PC-3 (cell line): ENCODE measurements at regions of chr20 and their contacts with region 1.

Region 1: DNA sequence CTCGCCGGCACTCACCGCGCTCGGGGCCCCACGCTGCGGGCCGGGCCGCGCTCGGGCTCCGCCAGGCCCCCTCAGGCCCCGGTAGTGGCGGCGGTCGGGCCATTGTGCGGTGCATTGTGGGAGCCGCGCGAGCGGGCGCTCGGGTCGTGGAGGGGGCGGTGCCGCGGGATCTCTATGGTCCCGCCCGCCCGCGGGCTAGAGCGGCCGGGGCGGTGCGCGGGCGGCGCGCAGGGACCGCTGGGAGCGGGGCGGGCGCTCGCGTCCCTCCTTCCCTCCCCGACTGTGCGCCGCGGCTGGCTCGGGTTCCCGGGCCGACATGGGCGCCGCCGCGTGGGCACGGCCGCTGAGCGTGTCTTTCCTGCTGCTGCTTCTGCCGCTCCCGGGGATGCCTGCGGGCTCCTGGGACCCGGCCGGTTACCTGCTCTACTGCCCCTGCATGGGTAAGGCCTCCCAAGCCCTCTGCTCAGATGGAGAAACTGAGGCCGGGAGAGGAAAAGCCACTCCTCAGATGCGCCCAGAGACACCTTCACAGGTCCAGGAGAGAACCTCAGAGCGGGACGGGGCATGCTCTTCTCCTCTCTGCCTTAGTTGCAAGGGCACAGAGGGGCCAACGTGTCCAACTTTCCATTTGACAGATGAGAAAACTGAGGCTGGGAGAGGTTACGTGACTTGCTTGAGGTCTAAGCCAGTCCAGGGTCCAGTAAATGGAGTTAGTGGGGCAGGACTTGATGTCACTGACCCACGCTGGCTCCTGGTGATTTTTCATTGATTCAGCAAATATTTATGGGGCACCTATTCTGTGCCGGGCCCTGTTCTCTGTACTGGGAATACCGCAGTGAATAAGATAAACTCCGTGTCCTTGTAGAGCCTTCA is at the starts of genes PLAGL2 and POFUT1:
- DNase-seq: peak; percentile 92
- ATAC-seq: peak; percentile 97
- H3K4me3 ChIP-seq: peak within 1 kb of the TSS; percentile 97
- H3K27ac ChIP-seq: peak within 1 kb of the TSS; percentile 27
- H3K4me1 ChIP-seq: peaks cover 42% of the 10 kb centered on the region
- H3K27me3 ChIP-seq: no peaks in the 10 kb centered on the region
- CTCF ChIP-seq: peak; percentile 34; the same call in 1 of the 2 replicates
- total RNA-seq, gene PLAGL2: 4.4 and 6.2 TPM in 2 replicates
- total RNA-seq, gene POFUT1: 41.9 and 56.3 TPM in 2 replicates

Region 2: GRCh38 chr20:32189691-32190615 is 17.9 kb before region 1 on chr20:
- CTCF ChIA-PET with region 1: no interaction called
- POLR2A ChIA-PET with region 1: no interaction called
- intact Hi-C with region 1: no loop called
- DNase-seq: no peak
- ATAC-seq: peak; percentile 66
- H3K4me3 ChIP-seq: peak overlapping the region; percentile 76
- H3K27ac ChIP-seq: no peak overlapping the region
- H3K4me1 ChIP-seq: peaks cover 7% of the 10 kb centered on the region
- H3K27me3 ChIP-seq: no peaks in the 10 kb centered on the region
- CTCF ChIP-seq: no peak

Region 3: DNA sequence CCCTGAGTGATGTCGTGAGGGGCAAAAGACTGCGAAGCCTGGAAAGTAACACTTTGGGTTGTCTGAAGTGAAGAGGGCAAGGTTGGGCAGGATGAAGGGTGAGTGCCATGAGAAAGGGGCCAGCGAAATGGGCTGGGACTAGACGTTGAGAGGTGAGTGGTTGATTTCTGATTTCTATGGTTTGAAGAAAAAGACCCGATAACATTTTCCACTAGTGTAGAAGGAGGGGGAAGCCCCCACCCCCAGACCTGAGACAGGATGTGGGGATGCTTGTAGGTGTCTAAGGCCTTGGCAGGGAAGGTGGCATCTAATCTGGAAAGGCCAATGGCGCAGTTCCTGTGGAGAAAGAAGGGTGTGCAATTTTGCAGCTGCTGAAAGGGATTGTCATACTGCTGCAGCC is 44.3 kb after region 1 on chr20:
- CTCF ChIA-PET with region 1: no interaction called
- POLR2A ChIA-PET with region 1: no interaction called
- intact Hi-C with region 1: loop called (anchors 5 kb)
- DNase-seq: no peak
- ATAC-seq: no peak
- H3K4me3 ChIP-seq: no peak overlapping the region
- H3K27ac ChIP-seq: no peak overlapping the region
- H3K4me1 ChIP-seq: peaks cover 20% of the 10 kb centered on the region
- H3K27me3 ChIP-seq: no peaks in the 10 kb centered on the region
- CTCF ChIP-seq: no peak

Region 4: GRCh38 chr20:32325706-32326503 is 118.0 kb after region 1 on chr20:
- CTCF ChIA-PET with region 1: no interaction called
- POLR2A ChIA-PET with region 1: no interaction called
- intact Hi-C with region 1: loop called (anchors 5 kb)
- DNase-seq: peak; percentile 96
- ATAC-seq: peak; percentile 99
- H3K4me3 ChIP-seq: peak overlapping the region; percentile 6; the same call in 1 of the 2 replicates
- H3K27ac ChIP-seq: peak overlapping the region; percentile 92
- H3K4me1 ChIP-seq: peaks cover 11% of the 10 kb centered on the region
- H3K27me3 ChIP-seq: no peaks in the 10 kb centered on the region
- CTCF ChIP-seq: no peak

Region 5: DNA sequence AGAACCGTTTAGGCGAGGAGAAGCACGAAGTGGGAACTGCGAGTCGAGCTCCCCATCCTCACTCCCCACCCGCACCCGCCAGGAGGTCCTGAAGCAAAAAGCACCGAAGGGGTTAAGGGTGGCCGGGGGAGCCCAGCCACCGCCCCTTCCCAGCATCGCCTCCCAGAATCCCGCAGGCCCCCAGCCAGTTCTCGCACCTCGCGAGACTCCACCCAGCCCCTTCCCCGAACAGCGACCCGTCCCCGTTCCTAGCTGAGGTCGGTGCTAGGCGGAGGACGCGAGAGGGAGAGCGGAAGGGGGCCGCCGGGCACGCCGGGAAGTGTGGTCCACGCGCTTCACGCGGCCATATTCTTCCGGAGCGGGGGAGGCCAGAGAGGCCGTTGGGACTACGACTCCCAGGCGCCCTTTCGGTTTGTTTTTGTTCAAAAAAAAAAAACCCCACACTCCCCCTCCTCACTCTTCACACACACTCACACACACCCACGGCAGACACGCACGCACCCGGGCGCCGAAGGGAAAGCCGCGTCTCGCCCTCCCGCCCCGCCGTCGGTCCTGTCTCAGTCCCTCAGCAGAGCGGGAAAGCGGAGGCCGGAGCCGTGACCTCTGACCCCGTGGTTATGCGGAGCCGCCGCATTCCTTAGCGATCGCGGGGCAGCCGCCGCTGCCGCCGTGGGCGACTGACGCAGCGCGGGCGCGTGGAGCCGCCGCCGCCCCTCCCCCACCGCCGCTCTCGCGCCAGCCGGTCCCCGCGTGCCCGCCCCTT is 150.2 kb after region 1 on chr20 and contains the start of gene ASXL1:
- CTCF ChIA-PET with region 1: no interaction called
- POLR2A ChIA-PET with region 1: no interaction called
- intact Hi-C with region 1: loop called (anchors 10 kb)
- DNase-seq: peak; percentile 97
- ATAC-seq: peak; percentile 80
- H3K4me3 ChIP-seq: peak within 1 kb of the TSS; percentile 99
- H3K27ac ChIP-seq: peak within 1 kb of the TSS; percentile 86
- H3K4me1 ChIP-seq: peaks cover 50% of the 10 kb centered on the region
- H3K27me3 ChIP-seq: no peaks in the 10 kb centered on the region
- CTCF ChIP-seq: no peak
- total RNA-seq, gene ASXL1: 42.8 and 60.7 TPM in 2 replicates